CD4-positive, alpha-beta T cell (primary cell): ENCODE measurements at regions of chr10 and their contacts with region 1.

Region 1: GRCh38 chr10:133309111-133309719 is 501 bp downstream of the ZNF511 start:
- DNase-seq: peak; percentile 89 to 96 (median 94)
- ATAC-seq: peak; percentile 67
- H3K4me3 ChIP-seq: peak overlapping the region; percentile 78
- H3K4me3 Mint-ChIP-seq: peak overlapping the region; percentile 86
- H3K27ac ChIP-seq: peak overlapping the region; percentile 80 to 99
- H3K27ac Mint-ChIP-seq: peak overlapping the region; percentile 87
- H3K4me1 ChIP-seq: peaks cover 35% of the 10 kb centered on the region
- H3K4me1 Mint-ChIP-seq: peaks cover 29% of the 10 kb centered on the region
- H3K27me3 ChIP-seq: no peaks in the 10 kb centered on the region
- H3K27me3 Mint-ChIP-seq: peaks cover 7% of the 10 kb centered on the region
- CTCF ChIP-seq: no peak

Region 2: DNA sequence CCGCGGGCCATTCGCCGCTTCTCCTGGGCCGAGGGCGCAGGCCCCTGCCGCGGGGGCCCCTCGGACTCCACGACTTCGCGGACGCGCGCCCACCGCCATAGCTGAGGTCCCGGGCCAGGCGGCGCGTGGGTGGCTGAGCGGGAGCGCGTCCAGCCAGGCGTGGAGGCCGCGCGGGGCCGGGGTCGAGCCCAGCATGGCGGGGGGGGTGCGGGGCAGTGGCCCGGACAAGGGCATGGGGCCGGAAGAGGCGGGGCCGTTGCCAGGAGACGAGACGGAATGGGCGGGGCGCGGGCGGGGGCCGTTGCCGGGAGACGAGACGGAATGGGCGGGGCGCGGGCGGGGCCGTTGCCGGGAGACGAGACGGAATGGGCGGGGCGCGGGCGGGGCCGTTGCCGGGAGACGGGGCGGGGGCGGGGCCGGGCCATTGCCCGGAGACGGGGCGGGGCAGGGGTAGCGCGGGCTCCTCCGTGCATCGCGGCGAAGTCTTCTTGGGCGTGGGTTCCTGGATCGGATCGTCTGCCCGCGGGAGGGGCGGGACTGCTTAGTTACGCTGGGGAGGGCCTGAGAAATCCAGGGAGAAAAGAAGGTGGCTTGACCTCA is 47.4 kb before region 1 on chr10:
- CTCF ChIA-PET with region 1: interaction called, 20 read pairs
- POLR2A ChIA-PET with region 1: interaction called, 6 read pairs
- intact Hi-C with region 1: loop called (anchors 1 to 5 kb)
- DNase-seq: peak; percentile 75 to 91 (median 85)
- ATAC-seq: peak; percentile 27
- H3K4me3 ChIP-seq: peak overlapping the region; percentile 55
- H3K4me3 Mint-ChIP-seq: peak overlapping the region; percentile 82
- H3K27ac ChIP-seq: peak overlapping the region; percentile 63 to 71
- H3K27ac Mint-ChIP-seq: peak overlapping the region; percentile 99
- H3K4me1 ChIP-seq: peaks cover 93% of the 10 kb centered on the region
- H3K4me1 Mint-ChIP-seq: peaks cover 80% of the 10 kb centered on the region
- H3K27me3 ChIP-seq: no peaks in the 10 kb centered on the region
- H3K27me3 Mint-ChIP-seq: peaks cover 5% of the 10 kb centered on the region
- CTCF ChIP-seq: no peak

Region 3: DNA sequence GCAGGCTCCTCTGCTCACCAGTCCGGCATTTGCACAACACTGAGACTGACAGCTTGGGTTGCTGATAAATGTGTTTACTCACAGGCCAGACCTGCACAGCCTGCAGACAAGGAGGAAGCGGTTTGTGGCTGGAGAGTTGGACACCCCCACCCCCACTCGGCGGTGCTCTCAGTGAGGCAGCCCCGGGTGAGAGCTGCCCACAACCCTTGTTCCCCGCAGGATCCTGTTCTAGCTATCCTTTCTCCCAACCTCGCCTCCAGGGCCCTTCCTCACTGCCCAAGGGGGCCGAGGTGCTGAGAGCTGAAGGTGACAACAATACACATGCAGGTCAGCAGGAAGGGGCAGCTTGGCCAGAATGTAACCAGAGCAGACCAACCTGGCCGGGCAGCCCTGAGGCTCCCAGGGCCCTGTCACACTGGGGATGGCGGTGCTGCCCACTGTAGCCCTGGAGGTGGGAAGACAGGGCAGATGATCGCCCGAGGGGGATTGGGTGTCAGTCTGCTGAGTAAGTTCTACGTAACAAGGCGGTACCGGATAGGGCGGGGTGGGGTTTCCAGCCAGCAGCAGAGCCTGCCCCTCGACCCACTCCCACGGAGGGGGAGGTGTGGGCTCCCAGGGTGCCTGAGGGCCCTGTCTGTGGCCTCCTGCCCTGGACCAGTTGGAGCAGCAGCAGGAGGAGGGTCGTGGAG is 30.5 kb before region 1 on chr10:
- CTCF ChIA-PET with region 1: interaction called, 12 read pairs
- POLR2A ChIA-PET with region 1: interaction called, 7 read pairs
- intact Hi-C with region 1: no loop called
- DNase-seq: peak in 13 of 14 experiments; percentile 42 to 91 (median 54)
- ATAC-seq: peak; percentile 33
- H3K4me3 ChIP-seq: peak overlapping the region; percentile 37
- H3K4me3 Mint-ChIP-seq: peak overlapping the region; percentile 91
- H3K27ac ChIP-seq: peak overlapping the region; percentile 86
- H3K27ac Mint-ChIP-seq: peak overlapping the region; percentile 97
- H3K4me1 ChIP-seq: peaks cover 65% of the 10 kb centered on the region
- H3K4me1 Mint-ChIP-seq: peaks cover 40% of the 10 kb centered on the region
- H3K27me3 ChIP-seq: no peaks in the 10 kb centered on the region
- H3K27me3 Mint-ChIP-seq: no peaks in the 10 kb centered on the region
- CTCF ChIP-seq: no peak

Region 4: GRCh38 chr10:133292919-133293809 is 16.1 kb before region 1 on chr10:
- CTCF ChIA-PET with region 1: no interaction called
- POLR2A ChIA-PET with region 1: no interaction called
- intact Hi-C with region 1: no loop called
- DNase-seq: peak in 3 of 14 experiments; percentile 30 to 76 (median 67)
- ATAC-seq: no peak
- H3K4me3 ChIP-seq: no peak overlapping the region
- H3K4me3 Mint-ChIP-seq: no peak overlapping the region
- H3K27ac ChIP-seq: no peak overlapping the region
- H3K27ac Mint-ChIP-seq: no peak overlapping the region
- H3K4me1 ChIP-seq: peaks cover 4% of the 10 kb centered on the region
- H3K4me1 Mint-ChIP-seq: no peaks in the 10 kb centered on the region
- H3K27me3 ChIP-seq: no peaks in the 10 kb centered on the region
- H3K27me3 Mint-ChIP-seq: no peaks in the 10 kb centered on the region
- CTCF ChIP-seq: no peak

Region 5: DNA sequence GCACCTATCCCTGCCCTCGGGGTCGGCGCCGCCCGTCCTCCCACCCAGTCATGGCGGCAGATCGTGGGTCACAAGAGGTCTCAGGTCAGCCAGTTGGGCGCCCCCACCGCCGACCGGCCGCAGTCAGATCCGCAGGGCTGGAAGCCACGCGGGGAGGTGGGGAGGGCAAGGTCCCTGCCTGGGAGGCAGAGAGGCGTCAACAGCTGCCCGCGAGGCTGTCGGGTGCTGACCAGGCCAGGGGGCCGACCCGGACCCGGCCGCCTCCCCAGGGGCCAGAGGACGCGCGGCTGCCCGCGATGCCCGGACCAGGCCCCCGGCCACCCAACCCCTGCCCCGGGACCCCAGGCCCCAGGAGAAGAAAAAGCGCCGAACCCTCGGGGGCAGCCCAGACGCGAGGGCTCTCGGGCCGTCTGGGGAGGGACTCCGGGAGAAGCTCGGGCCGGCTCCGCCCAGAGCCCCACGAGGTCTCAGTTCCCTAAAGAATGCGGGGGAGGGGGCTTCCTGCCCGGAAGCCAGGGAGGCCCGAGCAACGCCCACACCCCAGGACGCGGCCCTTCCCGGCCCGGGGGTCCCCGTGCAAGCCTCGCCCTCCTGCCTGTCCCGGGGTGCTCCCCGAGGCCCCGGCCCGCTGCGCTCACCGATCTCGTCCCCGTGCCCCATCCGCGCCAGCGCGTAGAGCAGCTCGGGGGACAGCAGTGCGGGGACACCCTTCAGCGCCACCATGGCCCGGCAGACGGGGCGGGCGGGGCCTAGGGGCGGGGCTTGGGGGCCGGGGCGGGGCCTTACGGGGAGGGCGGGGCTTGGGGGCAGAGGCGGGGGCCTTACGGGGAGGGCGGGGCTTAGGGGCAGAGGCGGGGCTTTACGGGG is 48.3 kb after region 1 on chr10 and contains the start of gene FUOM:
- CTCF ChIA-PET with region 1: interaction called, 3 read pairs
- POLR2A ChIA-PET with region 1: no interaction called
- intact Hi-C with region 1: loop called in 1 of 2 experiments (anchors 1 kb)
- DNase-seq: peak; percentile 51 to 88 (median 66)
- ATAC-seq: peak; percentile 91
- H3K4me3 ChIP-seq: peak within 1 kb of the TSS; percentile 63
- H3K4me3 Mint-ChIP-seq: peak within 1 kb of the TSS; percentile 83
- H3K27ac ChIP-seq: peak within 1 kb of the TSS in 1 of 2 donors; percentile 29
- H3K27ac Mint-ChIP-seq: peak within 1 kb of the TSS; percentile 53
- H3K4me1 ChIP-seq: peaks cover 22% of the 10 kb centered on the region
- H3K4me1 Mint-ChIP-seq: no peaks in the 10 kb centered on the region
- H3K27me3 ChIP-seq: no peaks in the 10 kb centered on the region
- H3K27me3 Mint-ChIP-seq: no peaks in the 10 kb centered on the region
- CTCF ChIP-seq: no peak
- total RNA-seq, gene FUOM: 10.3 to 11.7 TPM

Region 6: GRCh38 chr10:133373104-133373624 is 63.9 kb after region 1 on chr10 and contains the start of gene ECHS1:
- CTCF ChIA-PET with region 1: no interaction called
- POLR2A ChIA-PET with region 1: no interaction called
- intact Hi-C with region 1: loop called (anchors 2 kb)
- DNase-seq: peak; percentile 79 to 95 (median 92)
- ATAC-seq: peak; percentile 99
- H3K4me3 ChIP-seq: peak within 1 kb of the TSS; percentile 60
- H3K4me3 Mint-ChIP-seq: peak within 1 kb of the TSS; percentile 87
- H3K27ac ChIP-seq: no peak within 1 kb of the TSS
- H3K27ac Mint-ChIP-seq: peak within 1 kb of the TSS; percentile 55
- H3K4me1 ChIP-seq: peaks cover 25% of the 10 kb centered on the region
- H3K4me1 Mint-ChIP-seq: peaks cover 4% of the 10 kb centered on the region
- H3K27me3 ChIP-seq: no peaks in the 10 kb centered on the region
- H3K27me3 Mint-ChIP-seq: no peaks in the 10 kb centered on the region
- CTCF ChIP-seq: no peak
- total RNA-seq, gene ECHS1: 7.6 to 8.3 TPM

Region 7: DNA sequence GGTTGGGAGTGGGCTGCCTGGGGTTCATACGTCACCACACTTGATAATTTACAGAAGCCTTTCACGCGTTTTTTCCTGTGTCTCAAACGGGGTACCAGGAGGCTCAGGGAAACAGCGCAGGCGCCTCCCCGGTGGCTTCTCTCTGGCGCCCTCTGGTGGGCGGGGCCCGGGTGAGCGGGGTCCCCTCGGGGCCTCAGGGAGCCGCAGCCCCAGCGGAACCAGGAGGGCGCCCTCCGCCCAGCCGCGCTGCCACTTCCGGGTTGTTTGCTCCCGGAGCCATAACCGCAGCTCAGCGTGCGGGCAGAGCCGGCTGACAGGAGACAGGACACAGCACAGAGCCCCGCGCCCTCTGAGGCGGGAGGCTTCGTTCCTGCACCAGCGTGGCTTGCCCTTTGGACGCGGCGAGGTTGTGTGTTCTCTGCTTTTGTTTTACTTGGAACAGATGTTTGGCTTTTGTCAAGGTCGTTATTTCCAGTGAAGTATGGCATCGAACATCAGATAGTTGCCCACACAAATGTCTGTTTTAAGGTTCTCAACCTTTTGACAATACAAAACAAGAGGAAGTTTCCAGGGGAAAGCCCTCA is 211.0 kb after region 1 on chr10:
- CTCF ChIA-PET with region 1: interaction called, 3 read pairs
- POLR2A ChIA-PET with region 1: no interaction called
- intact Hi-C with region 1: loop called in 1 of 2 experiments (anchors 2 kb)
- DNase-seq: peak; percentile 74 to 95 (median 90)
- ATAC-seq: peak; percentile 98
- H3K4me3 ChIP-seq: peak overlapping the region; percentile 49
- H3K4me3 Mint-ChIP-seq: peak overlapping the region; percentile 58
- H3K27ac ChIP-seq: no peak overlapping the region
- H3K27ac Mint-ChIP-seq: no peak overlapping the region
- H3K4me1 ChIP-seq: peaks cover 12% of the 10 kb centered on the region
- H3K4me1 Mint-ChIP-seq: peaks cover 11% of the 10 kb centered on the region
- H3K27me3 ChIP-seq: peaks cover 0 to 4% of the 10 kb centered on the region in 2 experiments
- H3K27me3 Mint-ChIP-seq: peaks cover 17% of the 10 kb centered on the region
- CTCF ChIP-seq: peak; percentile 93